ENCODE measurements at regions of chr1 and their contacts with region 1.

Region 1: DNA sequence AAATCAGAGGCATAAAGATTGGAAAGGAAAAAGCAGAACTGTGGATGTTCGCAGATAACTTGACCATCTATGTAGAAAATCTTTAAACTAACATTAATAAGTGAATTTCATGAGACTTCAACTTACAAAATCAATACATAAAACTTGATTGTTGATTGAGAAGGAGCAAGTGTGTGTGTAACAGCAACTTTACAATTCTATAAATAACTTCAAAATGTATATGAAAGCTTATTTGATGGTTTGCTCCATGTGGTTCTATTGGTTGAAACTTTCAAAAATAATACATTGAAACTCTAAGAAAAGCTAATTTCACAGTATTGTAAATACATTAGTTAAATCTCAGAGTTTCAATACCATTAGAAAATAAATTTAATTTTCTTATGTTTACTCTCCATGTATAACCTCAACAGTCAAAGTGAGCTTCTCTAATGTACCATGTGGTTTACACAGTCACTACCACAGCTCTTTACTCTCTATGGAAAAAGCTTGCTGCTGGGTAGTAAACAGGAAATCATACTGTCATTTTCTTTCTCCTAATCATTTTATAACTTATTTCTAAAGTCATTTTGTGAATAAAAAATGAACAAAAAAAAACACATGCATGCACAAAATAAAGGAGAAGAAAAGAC is 12.0 kb downstream of the AKT3 start:
- DNase-seq: no peak
- ATAC-seq: peak; percentile 94
- H3K4me3 Mint-ChIP-seq: no peak overlapping the region
- H3K27ac Mint-ChIP-seq: peak overlapping the region; percentile 60
- H3K4me1 Mint-ChIP-seq: peaks cover 39% of the 10 kb centered on the region
- H3K27me3 Mint-ChIP-seq: no peaks in the 10 kb centered on the region

Region 2: GRCh38 chr1:243727503-243728203 is 110.4 kb before region 1 on chr1:
- CTCF ChIA-PET with region 1: no interaction called
- POLR2A ChIA-PET with region 1: no interaction called
- intact Hi-C with region 1: no loop called
- DNase-seq: no peak
- ATAC-seq: no peak
- H3K4me3 Mint-ChIP-seq: no peak overlapping the region
- H3K27ac Mint-ChIP-seq: no peak overlapping the region
- H3K4me1 Mint-ChIP-seq: peaks cover 29% of the 10 kb centered on the region
- H3K27me3 Mint-ChIP-seq: no peaks in the 10 kb centered on the region

Region 3: GRCh38 chr1:243801378-243801777 is 36.6 kb before region 1 on chr1:
- CTCF ChIA-PET with region 1: interaction called, 5 read pairs
- POLR2A ChIA-PET with region 1: interaction called, 4 read pairs
- intact Hi-C with region 1: loop called in 1 of 2 experiments (anchors 2 kb)
- DNase-seq: no peak
- ATAC-seq: no peak
- H3K4me3 Mint-ChIP-seq: no peak overlapping the region
- H3K27ac Mint-ChIP-seq: no peak overlapping the region
- H3K4me1 Mint-ChIP-seq: peaks cover 50% of the 10 kb centered on the region
- H3K27me3 Mint-ChIP-seq: no peaks in the 10 kb centered on the region

Region 4: DNA sequence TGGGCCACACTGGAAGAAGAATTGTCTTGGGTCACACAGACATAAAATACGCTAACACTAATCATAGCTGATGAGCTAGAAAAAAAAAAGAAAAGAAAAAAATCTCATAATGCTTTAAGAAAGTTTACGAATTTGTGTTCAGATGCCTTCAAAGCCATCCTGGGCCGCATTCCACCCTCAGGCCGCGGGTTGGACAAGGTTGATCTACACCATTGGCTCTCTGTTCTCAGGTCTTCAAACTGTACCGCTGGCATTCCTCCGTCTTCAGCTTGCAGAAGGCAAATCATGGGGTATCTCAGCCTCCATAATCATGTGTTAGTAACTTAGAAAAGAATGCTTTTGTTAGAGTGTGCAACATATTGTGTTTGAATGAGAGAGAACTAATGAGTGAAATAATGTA is 26.9 kb after region 1 on chr1:
- CTCF ChIA-PET with region 1: no interaction called
- POLR2A ChIA-PET with region 1: no interaction called
- intact Hi-C with region 1: no loop called
- DNase-seq: no peak
- ATAC-seq: no peak
- H3K4me3 Mint-ChIP-seq: no peak overlapping the region
- H3K27ac Mint-ChIP-seq: no peak overlapping the region
- H3K4me1 Mint-ChIP-seq: no peaks in the 10 kb centered on the region
- H3K27me3 Mint-ChIP-seq: peaks cover 2% of the 10 kb centered on the region